ENCODE measurements at regions of chr1 and their contacts with region 1.

Region 1: DNA sequence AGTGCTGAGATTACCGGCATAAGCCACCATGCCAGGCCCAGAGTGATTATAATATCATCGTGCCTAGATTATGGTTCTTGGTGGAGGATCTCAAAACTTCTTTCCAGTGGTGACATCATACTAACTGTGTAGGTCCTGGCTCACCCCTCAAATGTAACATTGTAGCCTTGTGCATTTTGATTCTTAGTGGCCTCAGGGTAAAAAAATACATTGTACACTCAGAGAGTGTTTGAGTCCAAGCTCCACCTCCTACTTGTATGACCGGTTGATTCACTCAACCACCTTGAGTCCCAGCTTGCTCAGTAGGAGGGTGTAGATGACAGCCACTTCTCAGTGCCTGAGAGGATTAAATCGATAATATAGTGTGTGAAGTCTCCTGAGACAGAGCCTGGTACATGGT is 38.3 kb downstream of the NCMAP start:
- DNase-seq: no peak
- H3K4me3 ChIP-seq: no peak overlapping the region
- H3K27ac ChIP-seq: no peak overlapping the region
- H3K4me1 ChIP-seq: no peaks in the 10 kb centered on the region
- H3K27me3 ChIP-seq: no peaks in the 10 kb centered on the region
- CTCF ChIP-seq: no peak
- EP300 ChIP-seq: no peak
- POLR2A ChIP-seq: no peak
- RAD21 ChIP-seq: no peak

Region 2: DNA sequence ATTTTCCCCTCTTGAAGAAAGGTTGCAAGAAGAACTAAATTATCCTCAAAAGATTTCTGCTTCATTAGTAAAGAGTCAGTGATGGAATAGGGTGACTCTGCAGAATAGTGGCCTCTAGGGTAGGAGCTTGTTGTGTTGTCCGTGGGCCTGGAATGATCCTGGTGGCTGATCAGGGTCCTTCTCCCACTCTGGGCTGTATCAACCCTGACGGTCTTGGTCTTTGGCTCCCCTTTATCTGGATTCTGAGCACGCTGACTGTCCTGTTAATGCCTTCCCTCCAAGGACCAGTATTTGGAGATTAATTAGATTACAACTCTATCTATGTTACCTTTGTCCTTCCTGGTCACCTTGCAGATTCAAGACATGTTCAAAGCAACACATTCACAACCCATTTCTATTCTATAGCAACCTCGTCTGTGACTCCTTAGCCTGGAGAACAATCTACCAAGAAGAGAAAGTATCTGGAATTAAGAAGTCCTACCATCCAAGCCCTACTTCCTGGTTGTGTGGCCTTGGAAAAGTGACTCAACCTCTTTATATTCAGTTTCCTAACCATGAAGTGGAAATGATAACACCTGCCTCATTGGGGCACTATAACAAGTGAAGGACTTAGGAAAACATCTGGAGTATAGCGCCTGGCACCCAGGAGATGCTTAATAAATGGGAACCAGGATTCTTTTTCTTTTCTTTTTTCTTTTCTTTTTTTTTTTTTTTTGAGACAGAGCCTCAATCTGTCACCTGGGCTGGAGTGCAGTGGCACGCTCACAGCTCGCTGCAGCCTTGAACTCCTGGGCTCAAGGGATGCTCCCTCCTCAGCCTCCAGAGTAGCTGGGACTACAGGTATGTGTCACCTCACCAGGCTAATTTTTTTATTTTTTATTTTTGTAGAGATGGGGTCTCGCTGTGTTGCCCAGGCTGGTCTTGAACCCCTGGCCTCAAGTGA is 12.4 kb after region 1 on chr1:
- CTCF ChIA-PET with region 1: interaction called, 11 read pairs
- POLR2A ChIA-PET with region 1: interaction called, 3 read pairs
- DNase-seq: no peak
- H3K4me3 ChIP-seq: no peak overlapping the region
- H3K27ac ChIP-seq: no peak overlapping the region
- H3K4me1 ChIP-seq: no peaks in the 10 kb centered on the region
- H3K27me3 ChIP-seq: no peaks in the 10 kb centered on the region
- CTCF ChIP-seq: no peak
- EP300 ChIP-seq: no peak
- POLR2A ChIP-seq: no peak
- RAD21 ChIP-seq: no peak

Region 3: DNA sequence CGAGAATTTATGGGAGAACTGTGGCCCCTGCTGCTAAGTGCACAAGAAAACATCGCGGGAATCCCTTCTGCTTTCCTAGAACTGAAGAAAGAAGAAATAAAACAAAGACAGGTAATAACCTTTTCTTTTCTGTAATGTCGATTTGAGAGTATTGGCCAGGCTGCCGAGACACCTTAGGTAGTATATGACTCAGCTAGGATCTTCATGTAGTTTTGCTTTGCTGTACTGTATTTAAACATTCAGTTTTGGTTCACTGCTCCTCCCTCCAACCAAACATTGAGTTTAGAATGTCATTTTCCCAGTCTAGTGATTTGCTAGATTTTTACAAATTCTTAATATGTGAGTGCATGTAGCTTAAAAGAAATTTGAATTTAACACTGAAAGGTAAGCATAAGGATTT is 54.8 kb after region 1 on chr1:
- CTCF ChIA-PET with region 1: no interaction called
- POLR2A ChIA-PET with region 1: no interaction called
- DNase-seq: no peak
- H3K4me3 ChIP-seq: no peak overlapping the region
- H3K27ac ChIP-seq: no peak overlapping the region
- H3K4me1 ChIP-seq: peaks cover 0 to 3% (median 0%) of the 10 kb centered on the region in 4 experiments; a peak in 2 of 7 replicates
- H3K27me3 ChIP-seq: no peaks in the 10 kb centered on the region
- CTCF ChIP-seq: no peak
- EP300 ChIP-seq: no peak
- POLR2A ChIP-seq: no peak
- RAD21 ChIP-seq: no peak

Region 4: GRCh38 chr1:24805534-24806301 is 211.6 kb after region 1 on chr1:
- CTCF ChIA-PET with region 1: no interaction called
- POLR2A ChIA-PET with region 1: no interaction called
- DNase-seq: no peak
- H3K4me3 ChIP-seq: no peak overlapping the region
- H3K27ac ChIP-seq: no peak overlapping the region
- H3K4me1 ChIP-seq: no peaks in the 10 kb centered on the region
- H3K27me3 ChIP-seq: no peaks in the 10 kb centered on the region
- CTCF ChIP-seq: no peak
- EP300 ChIP-seq: no peak
- POLR2A ChIP-seq: no peak
- RAD21 ChIP-seq: no peak